ENCODE measurements at regions of chr3 and their contacts with region 1.

Region 1: DNA sequence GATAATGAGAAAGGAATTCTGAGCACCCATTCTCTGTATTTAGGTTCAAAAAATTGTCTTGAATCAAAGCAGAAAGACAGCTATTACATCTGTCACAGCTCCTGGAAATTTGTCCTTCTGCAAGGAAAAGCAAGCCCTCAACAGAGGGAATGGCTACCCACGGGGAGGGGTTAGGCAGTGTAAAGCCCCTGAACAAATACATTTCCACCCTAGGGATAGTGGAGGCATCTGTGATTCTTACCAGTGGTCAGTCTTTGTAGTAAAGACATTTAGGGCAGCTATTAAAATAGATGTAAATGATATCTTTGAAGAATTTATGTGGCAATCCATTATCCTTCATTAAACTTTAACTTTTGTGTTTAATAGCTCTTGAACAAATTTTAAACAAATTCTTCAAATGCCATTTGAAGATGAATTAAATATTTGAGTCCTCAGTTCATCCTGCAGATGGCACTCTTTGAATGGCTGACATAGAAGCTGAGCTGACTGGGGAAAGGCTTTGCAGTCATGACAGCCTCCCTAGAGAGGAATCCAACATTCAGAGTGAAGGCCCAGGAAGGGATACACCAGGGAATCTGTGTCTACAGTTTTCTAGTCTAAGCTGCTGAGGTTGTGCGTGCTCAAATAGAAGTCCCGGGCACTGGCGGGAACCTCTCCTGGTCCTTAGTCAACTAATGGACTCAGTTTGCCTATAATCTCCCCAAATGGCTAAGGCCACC is 359.7 kb upstream of the ROPN1 start:
- DNase-seq: peak in 2 of 10 donors; percentile 41 to 52
- H3K4me3 ChIP-seq: no peak overlapping the region
- H3K27ac ChIP-seq: peak overlapping the region in 43 of 59 donors; percentile 1 to 83 (median 49)
- H3K27me3 ChIP-seq: no peaks in the 10 kb centered on the region
- CTCF ChIP-seq: peak; percentile 60 to 87 (median 73)

Region 2: GRCh38 chr3:124044956-124045355 is 306.6 kb before region 1 on chr3:
- intact Hi-C with region 1: no loop called
- DNase-seq: no peak
- H3K4me3 ChIP-seq: no peak overlapping the region
- H3K27ac ChIP-seq: no peak overlapping the region
- H3K27me3 ChIP-seq: no peaks in the 10 kb centered on the region
- CTCF ChIP-seq: no peak

Region 3: DNA sequence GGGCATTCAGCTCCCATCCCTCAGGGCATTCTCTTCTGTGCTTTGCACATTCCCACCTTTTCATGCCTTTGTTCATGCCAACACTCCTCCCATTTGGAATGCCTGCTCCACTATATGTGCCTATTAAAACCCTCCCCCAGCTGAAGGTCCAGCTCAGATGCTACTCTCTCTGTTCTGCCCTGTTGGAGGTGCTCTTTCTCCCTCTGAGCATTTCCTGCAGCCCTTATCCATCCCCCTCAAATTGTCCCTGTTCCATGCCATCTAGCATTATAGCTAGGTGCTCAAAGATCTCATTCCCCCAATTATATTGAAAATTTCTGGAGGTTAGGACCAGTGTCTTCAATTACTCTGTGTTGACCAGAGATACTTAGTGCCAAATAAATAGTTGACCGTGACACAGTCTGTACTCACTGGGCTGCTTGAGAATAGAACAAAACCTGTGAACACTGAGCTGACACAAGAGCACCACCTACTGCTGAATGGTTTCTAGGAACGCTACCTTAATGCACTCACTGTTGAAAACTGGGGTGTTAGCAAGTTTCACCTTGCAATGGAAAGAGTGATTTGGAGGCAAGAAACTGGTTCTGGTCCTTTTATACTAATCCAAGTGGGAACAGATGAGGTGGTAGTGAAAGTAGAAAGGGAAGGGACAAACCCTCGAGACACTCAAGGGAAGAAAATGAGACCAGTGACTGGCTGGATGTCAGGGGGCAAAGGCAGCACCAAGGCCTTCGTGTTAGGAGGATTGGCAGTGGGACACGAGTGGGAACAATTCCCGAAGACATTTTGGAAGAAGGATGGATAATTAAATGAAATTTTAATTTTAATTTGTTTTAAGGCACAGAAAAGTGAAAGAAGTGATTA is 69.9 kb before region 1 on chr3:
- intact Hi-C with region 1: no loop called
- DNase-seq: peak in 1 of 10 donors; percentile 49
- H3K4me3 ChIP-seq: no peak overlapping the region
- H3K27ac ChIP-seq: peak overlapping the region in 3 of 59 donors; percentile 20 to 32 (median 21)
- H3K27me3 ChIP-seq: no peaks in the 10 kb centered on the region
- CTCF ChIP-seq: peak in 54 of 56 donors; percentile 26 to 71 (median 54)

Region 4: GRCh38 chr3:124467980-124468902 is 116.7 kb after region 1 on chr3:
- intact Hi-C with region 1: loop called (anchors 2 to 5 kb)
- DNase-seq: peak in 9 of 10 donors; percentile 26 to 70 (median 46)
- H3K4me3 ChIP-seq: no peak overlapping the region
- H3K27ac ChIP-seq: peak overlapping the region in 35 of 59 donors; percentile 6 to 76 (median 51)
- H3K27me3 ChIP-seq: no peaks in the 10 kb centered on the region
- CTCF ChIP-seq: peak; percentile 70 to 98 (median 92)

Region 5: DNA sequence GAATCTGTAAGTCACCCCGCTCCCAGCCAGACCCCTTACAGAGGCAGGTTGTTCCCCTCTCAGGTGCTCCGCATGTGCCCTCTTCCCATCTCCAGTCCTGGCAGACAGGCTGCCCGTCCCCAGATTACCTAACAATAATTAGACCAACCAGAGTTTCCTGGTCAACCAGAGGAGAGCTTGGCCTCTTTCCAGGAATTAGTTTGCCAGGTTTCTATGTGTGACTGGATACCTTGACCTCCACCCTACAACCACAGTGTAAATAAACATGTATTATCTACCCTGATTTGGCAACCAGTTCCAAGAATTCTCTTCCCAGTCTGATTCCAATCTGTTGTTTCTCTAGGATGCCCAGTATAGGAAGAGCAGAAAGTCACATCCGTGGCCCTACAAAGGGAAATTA is 200.7 kb after region 1 on chr3:
- intact Hi-C with region 1: loop called (anchors 2 to 5 kb)
- DNase-seq: no peak
- H3K4me3 ChIP-seq: no peak overlapping the region
- H3K27ac ChIP-seq: no peak overlapping the region
- H3K27me3 ChIP-seq: no peaks in the 10 kb centered on the region
- CTCF ChIP-seq: no peak

Region 6: DNA sequence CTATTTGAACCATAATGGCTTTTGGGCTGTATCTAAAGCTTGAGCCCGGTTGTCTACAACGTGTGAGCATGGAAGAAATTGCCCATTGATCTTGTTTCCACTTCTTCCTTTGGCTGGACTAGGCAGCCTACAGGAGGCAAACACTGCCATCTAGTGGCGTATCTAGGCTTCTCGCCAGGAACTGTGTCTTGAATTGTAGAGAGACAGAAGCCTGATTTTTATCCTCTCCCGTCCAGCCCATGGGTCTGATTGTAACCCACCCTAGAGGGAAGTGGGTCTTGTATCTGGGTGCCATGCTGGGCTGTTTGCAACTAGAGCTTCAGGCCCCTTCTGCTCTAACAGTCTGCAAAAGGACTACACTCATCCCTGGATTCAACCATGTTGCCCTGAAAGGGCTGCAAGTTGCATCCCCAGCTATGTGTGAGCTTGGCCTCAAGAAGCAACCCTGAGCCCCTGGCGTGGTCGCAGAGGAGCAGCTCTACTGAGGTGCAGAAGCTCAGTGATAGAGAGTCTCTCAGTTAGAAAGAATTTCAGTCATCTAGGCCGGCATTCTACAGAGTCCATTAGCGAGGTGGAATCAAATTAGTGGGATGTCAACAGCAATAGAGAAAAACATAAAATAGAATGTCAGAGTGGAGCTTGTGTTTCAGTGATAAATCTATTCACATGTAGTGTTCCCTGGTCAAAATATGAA is 208.4 kb after region 1 on chr3:
- intact Hi-C with region 1: loop called in 1 of 2 experiments (anchors 2 kb)
- DNase-seq: peak; percentile 53 to 90 (median 79)
- H3K4me3 ChIP-seq: no peak overlapping the region
- H3K27ac ChIP-seq: peak overlapping the region in 51 of 59 donors; percentile 1 to 92 (median 70)
- H3K27me3 ChIP-seq: no peaks in the 10 kb centered on the region
- CTCF ChIP-seq: peak; percentile 38 to 97 (median 90)